Activated T-helper 1 cell treated with anti-CD3 and anti-CD28 coated beads, Interleukin-12 subunit alpha, Interleukin-12 subunit beta, Interleukin-2, Interleukin-4 antibody, amounts not matched to agents 30 ng/mL and 10 ng/mL and 1 ng/mL, durations not matched to agents 14 hours and 24 hours and 36 hours (primary cell): ENCODE measurements at regions of chr14 and their contacts with region 1.

Region 1: GRCh38 chr14:71497645-71498086 is 434.6 kb upstream of the RGS6 start:
- DNase-seq: peak; percentile 5
- H3K4me3 Mint-ChIP-seq: no peak overlapping the region
- H3K27ac Mint-ChIP-seq: no peak overlapping the region
- H3K4me1 Mint-ChIP-seq: peaks cover 15% of the 10 kb centered on the region
- H3K27me3 Mint-ChIP-seq: no peaks in the 10 kb centered on the region

Region 2: DNA sequence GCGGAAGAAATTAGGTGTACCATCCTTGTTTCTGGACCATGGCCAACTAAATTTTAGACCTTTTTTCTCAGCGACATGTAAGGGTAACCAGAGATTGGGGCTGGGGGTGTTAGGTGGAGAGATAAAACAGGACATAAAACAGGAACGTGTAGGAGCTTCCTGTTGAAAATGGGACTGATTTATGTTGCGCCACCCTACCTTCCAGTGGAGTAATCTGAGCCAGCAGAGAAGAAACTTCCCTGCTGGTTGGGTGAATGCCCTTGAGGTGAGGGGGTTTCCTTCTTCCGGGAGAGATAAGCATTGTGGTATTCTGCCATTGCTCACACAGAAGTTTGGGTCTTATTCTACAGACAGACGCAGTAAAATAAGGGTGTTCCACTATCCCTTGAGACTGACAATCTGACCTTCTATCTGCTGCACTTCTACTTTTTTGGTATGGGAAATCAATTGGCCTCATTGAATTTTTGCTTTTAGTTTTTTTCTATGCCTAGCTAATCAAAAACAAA is 172.8 kb before region 1 on chr14:
- intact Hi-C with region 1: no loop called
- DNase-seq: peak; percentile 59
- H3K4me3 Mint-ChIP-seq: peak overlapping the region; percentile 62
- H3K27ac Mint-ChIP-seq: peak overlapping the region; percentile 76
- H3K4me1 Mint-ChIP-seq: peaks cover 79% of the 10 kb centered on the region
- H3K27me3 Mint-ChIP-seq: no peaks in the 10 kb centered on the region

Region 3: GRCh38 chr14:71452539-71452938 is 45.1 kb before region 1 on chr14:
- intact Hi-C with region 1: loop called (anchors 5 kb)
- DNase-seq: no peak
- H3K4me3 Mint-ChIP-seq: no peak overlapping the region
- H3K27ac Mint-ChIP-seq: peak overlapping the region; percentile 44
- H3K4me1 Mint-ChIP-seq: peaks cover 34% of the 10 kb centered on the region
- H3K27me3 Mint-ChIP-seq: no peaks in the 10 kb centered on the region

Region 4: DNA sequence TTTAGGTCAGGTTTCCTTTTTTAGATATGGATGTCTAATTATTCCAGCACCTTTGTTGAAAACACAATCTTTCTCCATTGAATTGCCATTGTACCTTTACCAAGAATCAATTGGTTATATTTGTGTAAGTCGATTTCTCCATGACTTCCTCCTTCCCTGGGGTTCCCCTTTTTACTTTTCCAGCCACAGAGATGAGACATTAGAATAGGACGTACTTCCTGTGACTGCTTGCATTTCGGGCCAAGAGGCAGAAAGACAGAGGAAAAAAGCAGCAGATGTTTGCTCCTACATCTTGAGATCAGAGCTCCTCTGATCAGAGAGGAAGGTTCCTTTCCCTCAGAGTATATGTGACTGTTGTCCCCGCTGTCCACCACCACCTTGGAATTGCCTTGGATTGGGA is 19.1 kb before region 1 on chr14:
- intact Hi-C with region 1: loop called (anchors 2 kb)
- DNase-seq: no peak
- H3K4me3 Mint-ChIP-seq: peak overlapping the region; percentile 63
- H3K27ac Mint-ChIP-seq: peak overlapping the region; percentile 87
- H3K4me1 Mint-ChIP-seq: peaks cover 55% of the 10 kb centered on the region
- H3K27me3 Mint-ChIP-seq: no peaks in the 10 kb centered on the region

Region 5: GRCh38 chr14:71523630-71524319 is 26.1 kb after region 1 on chr14:
- intact Hi-C with region 1: loop called (anchors 1 kb)
- DNase-seq: no peak
- H3K4me3 Mint-ChIP-seq: no peak overlapping the region
- H3K27ac Mint-ChIP-seq: peak overlapping the region; percentile 32
- H3K4me1 Mint-ChIP-seq: peaks cover 21% of the 10 kb centered on the region
- H3K27me3 Mint-ChIP-seq: no peaks in the 10 kb centered on the region

Region 6: DNA sequence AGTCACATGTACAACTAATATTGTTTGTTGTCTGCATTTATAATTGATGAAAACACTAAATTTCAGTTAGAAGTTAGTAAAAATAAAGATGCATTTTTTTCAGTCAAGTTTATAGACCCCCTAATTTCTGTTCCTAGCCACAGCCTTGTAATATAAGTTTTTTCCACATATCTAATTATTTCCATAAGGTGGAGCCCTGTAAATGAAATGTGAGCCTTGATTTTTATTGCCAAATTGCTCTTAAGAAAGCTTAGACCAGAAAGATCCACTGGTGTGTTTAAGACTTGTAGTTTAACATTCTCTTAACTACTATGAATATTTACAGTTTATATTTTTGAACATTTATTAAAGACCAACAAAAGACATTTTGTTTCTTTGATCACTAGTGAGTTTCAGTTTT is 112.5 kb after region 1 on chr14:
- intact Hi-C with region 1: no loop called
- DNase-seq: no peak
- H3K4me3 Mint-ChIP-seq: no peak overlapping the region
- H3K27ac Mint-ChIP-seq: no peak overlapping the region
- H3K4me1 Mint-ChIP-seq: peaks cover 18% of the 10 kb centered on the region
- H3K27me3 Mint-ChIP-seq: no peaks in the 10 kb centered on the region

Region 7: DNA sequence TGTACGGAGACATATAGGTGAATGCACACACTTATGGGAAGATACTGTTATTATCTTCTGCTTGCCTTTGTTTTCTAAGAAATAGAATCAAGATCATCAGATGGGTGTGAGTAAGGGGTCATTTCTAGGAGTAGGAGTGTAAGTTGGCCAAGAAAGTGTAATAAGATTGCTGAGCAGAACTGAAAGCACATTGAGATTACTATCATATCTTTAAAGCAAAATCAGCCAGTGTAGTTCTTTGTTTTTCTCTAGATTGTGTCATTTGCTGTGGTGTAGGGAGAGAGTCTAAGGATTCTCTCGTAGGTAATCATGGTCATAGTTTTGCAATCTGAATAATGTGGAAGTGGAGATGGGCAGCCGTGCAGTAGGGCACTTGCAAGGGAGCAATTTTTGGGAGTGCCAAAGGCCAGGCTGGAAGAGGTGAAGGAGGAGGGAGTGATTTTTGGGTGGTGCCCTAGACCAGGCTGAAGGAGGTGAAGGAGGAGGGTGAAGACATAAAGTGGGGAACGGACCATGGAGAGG is 566.2 kb after region 1 on chr14:
- intact Hi-C with region 1: no loop called
- DNase-seq: no peak
- H3K4me3 Mint-ChIP-seq: no peak overlapping the region
- H3K27ac Mint-ChIP-seq: no peak overlapping the region
- H3K4me1 Mint-ChIP-seq: no peaks in the 10 kb centered on the region
- H3K27me3 Mint-ChIP-seq: peaks cover 19% of the 10 kb centered on the region